PC-3 (cell line): ENCODE measurements at regions of chr17 and their contacts with region 1.

Region 1: GRCh38 chr17:40559954-40560591 is 5.2 kb downstream of the CCR7 start:
- DNase-seq: peak; percentile 90
- ATAC-seq: peak; percentile 96
- H3K4me3 ChIP-seq: no peak overlapping the region
- H3K27ac ChIP-seq: no peak overlapping the region
- H3K4me1 ChIP-seq: peaks cover 6% of the 10 kb centered on the region; the same call in 1 of the 2 replicates
- H3K27me3 ChIP-seq: no peaks in the 10 kb centered on the region
- CTCF ChIP-seq: peak; percentile 91

Region 2: GRCh38 chr17:40303009-40303657 is 256.9 kb before region 1 on chr17:
- CTCF ChIA-PET with region 1: no interaction called
- POLR2A ChIA-PET with region 1: no interaction called
- intact Hi-C with region 1: loop called (anchors 5 kb)
- DNase-seq: peak; percentile 65
- ATAC-seq: peak; percentile 37; the same call in 1 of the 2 replicates
- H3K4me3 ChIP-seq: no peak overlapping the region
- H3K27ac ChIP-seq: no peak overlapping the region
- H3K4me1 ChIP-seq: peaks cover 10% of the 10 kb centered on the region
- H3K27me3 ChIP-seq: no peaks in the 10 kb centered on the region
- CTCF ChIP-seq: peak; percentile 72

Region 3: GRCh38 chr17:40399185-40399584 is 160.9 kb before region 1 on chr17:
- CTCF ChIA-PET with region 1: no interaction called
- POLR2A ChIA-PET with region 1: no interaction called
- intact Hi-C with region 1: loop called (anchors 1 kb)
- DNase-seq: peak; percentile 69
- ATAC-seq: peak; percentile 49; the same call in 1 of the 2 replicates
- H3K4me3 ChIP-seq: no peak overlapping the region
- H3K27ac ChIP-seq: no peak overlapping the region
- H3K4me1 ChIP-seq: no peaks in the 10 kb centered on the region
- H3K27me3 ChIP-seq: no peaks in the 10 kb centered on the region
- CTCF ChIP-seq: peak; percentile 65

Region 4: DNA sequence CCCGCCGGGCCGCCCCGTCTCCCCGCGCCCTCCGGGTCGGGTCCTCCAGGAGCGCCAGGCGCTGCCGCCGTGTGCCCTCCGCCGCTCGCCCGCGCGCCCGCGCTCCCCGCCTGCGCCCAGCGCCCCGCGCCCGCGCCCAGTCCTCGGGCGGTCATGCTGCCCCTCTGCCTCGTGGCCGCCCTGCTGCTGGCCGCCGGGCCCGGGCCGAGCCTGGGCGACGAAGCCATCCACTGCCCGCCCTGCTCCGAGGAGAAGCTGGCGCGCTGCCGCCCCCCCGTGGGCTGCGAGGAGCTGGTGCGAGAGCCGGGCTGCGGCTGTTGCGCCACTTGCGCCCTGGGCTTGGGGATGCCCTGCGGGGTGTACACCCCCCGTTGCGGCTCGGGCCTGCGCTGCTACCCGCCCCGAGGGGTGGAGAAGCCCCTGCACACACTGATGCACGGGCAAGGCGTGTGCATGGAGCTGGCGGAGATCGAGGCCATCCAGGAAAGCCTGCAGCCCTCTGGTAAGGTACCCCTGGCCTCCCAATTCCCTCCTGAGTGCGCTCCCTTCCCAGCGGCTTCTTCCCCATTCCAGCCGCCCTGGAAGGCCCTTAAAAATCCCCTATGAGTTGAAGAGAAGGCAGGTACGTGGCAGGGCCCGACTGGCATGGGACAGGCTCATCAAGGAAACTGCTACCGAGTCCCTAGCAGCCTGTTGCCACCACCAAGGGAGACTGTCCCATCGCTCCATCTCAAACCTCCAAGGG is 116.3 kb before region 1 on chr17:
- CTCF ChIA-PET with region 1: interaction called, 8 read pairs
- POLR2A ChIA-PET with region 1: no interaction called
- intact Hi-C with region 1: loop called (anchors 10 kb)
- DNase-seq: peak; percentile 62
- ATAC-seq: peak; percentile 60
- H3K4me3 ChIP-seq: peak overlapping the region; percentile 93
- H3K27ac ChIP-seq: no peak overlapping the region
- H3K4me1 ChIP-seq: peaks cover 18% of the 10 kb centered on the region
- H3K27me3 ChIP-seq: no peaks in the 10 kb centered on the region
- CTCF ChIP-seq: peak; percentile 38

Region 5: DNA sequence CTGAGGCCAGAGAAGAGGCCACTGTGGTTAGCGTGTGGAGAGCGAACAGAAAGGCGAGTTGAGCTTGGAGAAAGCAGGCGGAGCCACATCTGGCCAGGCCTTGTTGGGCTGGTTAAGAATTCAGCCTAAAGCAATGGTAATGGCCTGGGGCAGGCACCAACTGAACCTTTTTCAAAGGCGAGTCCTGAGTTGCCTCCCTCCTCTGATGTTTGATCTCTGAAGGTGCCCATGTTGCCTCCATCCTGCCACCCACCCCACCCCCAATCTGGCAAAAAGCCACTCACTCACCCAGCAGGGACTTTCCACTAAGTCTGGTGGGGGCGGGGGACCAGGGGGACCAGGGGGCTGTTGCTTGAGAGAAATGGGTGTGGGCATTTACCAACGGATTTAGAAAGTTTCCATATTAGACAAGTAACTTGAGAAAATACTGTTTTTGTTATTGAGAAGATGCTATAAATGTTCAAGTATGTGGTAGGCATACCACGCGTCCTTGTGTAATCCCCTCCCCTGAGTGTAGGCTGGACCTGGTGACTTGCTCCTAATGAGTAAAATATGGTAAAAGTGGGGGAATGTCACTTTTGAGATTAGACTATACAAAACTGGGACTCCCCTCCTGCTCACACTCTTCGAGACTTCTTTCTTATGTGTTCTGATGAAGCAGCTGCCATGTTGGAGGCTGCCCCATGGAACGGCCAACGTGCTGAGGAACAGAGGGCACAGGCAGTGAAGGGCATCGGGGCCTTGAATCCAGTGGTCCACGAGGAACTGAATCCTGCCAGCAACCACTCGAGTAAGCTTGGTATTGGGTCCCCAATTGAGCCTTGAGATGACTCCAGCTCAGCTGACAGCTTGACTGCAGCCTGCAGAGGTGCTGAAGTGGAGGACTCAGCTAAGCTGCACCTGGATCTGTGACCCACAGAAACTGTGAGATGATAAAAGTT is 28.8 kb before region 1 on chr17:
- CTCF ChIA-PET with region 1: interaction called, 48 read pairs
- POLR2A ChIA-PET with region 1: no interaction called
- intact Hi-C with region 1: loop called (anchors 1 kb)
- DNase-seq: no peak
- ATAC-seq: no peak
- H3K4me3 ChIP-seq: no peak overlapping the region
- H3K27ac ChIP-seq: peak overlapping the region; percentile 49
- H3K4me1 ChIP-seq: peaks cover 28% of the 10 kb centered on the region
- H3K27me3 ChIP-seq: no peaks in the 10 kb centered on the region
- CTCF ChIP-seq: no peak

Region 6: GRCh38 chr17:40582328-40582901 is 22.3 kb after region 1 on chr17:
- CTCF ChIA-PET with region 1: no interaction called
- POLR2A ChIA-PET with region 1: no interaction called
- intact Hi-C with region 1: no loop called
- DNase-seq: no peak
- ATAC-seq: no peak
- H3K4me3 ChIP-seq: no peak overlapping the region
- H3K27ac ChIP-seq: no peak overlapping the region
- H3K4me1 ChIP-seq: no peaks in the 10 kb centered on the region
- H3K27me3 ChIP-seq: no peaks in the 10 kb centered on the region
- CTCF ChIP-seq: no peak

Region 7: GRCh38 chr17:41098476-41098875 is 538.4 kb after region 1 on chr17:
- CTCF ChIA-PET with region 1: no interaction called
- POLR2A ChIA-PET with region 1: no interaction called
- intact Hi-C with region 1: no loop called
- DNase-seq: peak; percentile 57
- ATAC-seq: peak; percentile 16; the same call in 1 of the 2 replicates
- H3K4me3 ChIP-seq: no peak overlapping the region
- H3K27ac ChIP-seq: peak overlapping the region; percentile 49
- H3K4me1 ChIP-seq: peaks cover 33% of the 10 kb centered on the region
- H3K27me3 ChIP-seq: no peaks in the 10 kb centered on the region
- CTCF ChIP-seq: no peak